Heart right ventricle (tissue), 16 donors: ENCODE measurements at regions of chr5 and their contacts with region 1.

Region 1: GRCh38 chr5:77518304-77518703 is 26.2 kb upstream of the WDR41 start:
- DNase-seq: no peak
- ATAC-seq: no peak
- H3K4me3 ChIP-seq: no peak overlapping the region
- H3K27ac ChIP-seq: no peak overlapping the region
- H3K4me1 ChIP-seq: no peaks in the 10 kb centered on the region
- H3K27me3 ChIP-seq: peaks cover 0 to 30% (median 15%) of the 10 kb centered on the region in 7 donors
- CTCF ChIP-seq: peak in 6 of 9 donors; percentile 4 to 43 (median 22)

Region 2: DNA sequence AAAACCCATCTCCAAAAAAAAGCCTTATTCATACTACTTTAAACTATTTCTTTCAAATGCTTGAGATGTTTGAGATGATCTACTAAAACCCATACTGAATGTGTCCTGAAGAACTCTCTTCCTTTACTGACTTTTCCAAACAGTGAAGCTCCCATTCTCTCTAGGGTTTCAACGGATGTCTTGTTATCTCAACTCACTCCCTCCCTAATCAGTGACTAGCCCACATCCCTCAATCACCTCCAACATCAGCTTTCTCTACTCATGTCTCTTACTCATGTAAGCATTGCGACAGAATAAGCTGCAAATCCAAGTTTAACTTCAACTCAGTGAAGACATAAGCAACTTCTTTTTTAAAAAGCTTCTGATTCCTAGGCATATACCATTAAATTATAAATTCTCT is 68.3 kb before region 1 on chr5:
- intact Hi-C with region 1: loop called in 1 of 10 experiments (anchors 5 kb)
- DNase-seq: no peak
- ATAC-seq: no peak
- H3K4me3 ChIP-seq: no peak overlapping the region
- H3K27ac ChIP-seq: no peak overlapping the region
- H3K4me1 ChIP-seq: peaks cover 0 to 12% (median 6%) of the 10 kb centered on the region in 9 donors
- H3K27me3 ChIP-seq: no peaks in the 10 kb centered on the region
- CTCF ChIP-seq: no peak